ENCODE measurements at regions of chr12 and their contacts with region 1.

Region 1: DNA sequence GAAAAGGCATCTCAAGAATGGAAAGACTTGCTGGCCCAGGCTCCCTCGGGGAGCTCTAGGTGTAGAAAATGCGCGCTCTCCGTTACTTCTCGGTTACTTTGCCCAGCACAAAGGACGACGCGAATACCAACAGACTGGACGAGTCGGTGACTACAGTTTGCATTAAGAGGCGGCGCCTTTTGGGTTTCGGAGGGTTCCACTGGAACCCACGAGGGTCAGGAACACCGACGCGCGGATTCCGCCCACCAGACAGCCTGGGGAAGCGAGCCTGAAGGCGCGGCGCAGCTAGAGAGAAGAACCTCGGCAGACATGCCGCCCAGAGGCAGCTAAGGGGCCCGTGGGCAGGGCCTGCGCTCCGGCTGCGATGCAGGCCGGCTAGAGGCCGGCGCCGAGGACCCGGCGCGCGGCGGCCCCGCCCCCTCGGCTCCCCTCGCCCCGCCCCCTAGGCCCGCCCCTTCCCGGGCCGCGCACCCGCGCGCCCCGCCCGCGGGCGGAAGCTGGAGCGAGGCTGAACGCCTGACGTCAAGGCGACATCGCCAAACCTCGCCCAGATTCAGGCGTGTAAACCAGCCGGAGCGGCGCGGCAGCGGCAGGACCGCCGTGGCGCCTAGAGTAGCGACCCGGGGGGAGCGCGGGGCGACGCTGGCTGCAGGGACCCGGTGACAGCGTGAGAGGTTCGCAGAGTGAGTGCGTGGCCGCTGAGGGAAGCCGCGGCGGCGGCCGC is at the start of gene RAP1B:
- DNase-seq: peak; percentile 92 to 95 (median 92)
- ATAC-seq: peak; percentile 92 to 98 (median 96)
- H3K4me3 ChIP-seq: peak within 1 kb of the TSS; percentile 54 to 91 (median 82)
- H3K27ac ChIP-seq: peak within 1 kb of the TSS; percentile 95 to 99 (median 96)
- H3K4me1 ChIP-seq: peaks cover 5 to 43% (median 34%) of the 10 kb centered on the region in 12 donors
- H3K27me3 ChIP-seq: no peaks in the 10 kb centered on the region
- CTCF ChIP-seq: peak in 1 of 12 donors; percentile 3
- POLR2A ChIP-seq: peak in 1 of 2 donors; percentile 96
- total RNA-seq, gene RAP1B: 39.2 to 113 (median 52.2) TPM

Region 2: GRCh38 chr12:68358532-68359485 is 251.7 kb before region 1 on chr12:
- intact Hi-C with region 1: loop called in 8 of 10 experiments (anchors 2 to 10 kb)
- DNase-seq: peak in 3 of 5 donors; percentile 46 to 64 (median 58)
- ATAC-seq: peak; percentile 57 to 94 (median 80)
- H3K4me3 ChIP-seq: no peak overlapping the region
- H3K27ac ChIP-seq: peak overlapping the region in 4 of 12 donors; percentile 20 to 50 (median 44)
- H3K4me1 ChIP-seq: peaks cover 0 to 20% (median 6%) of the 10 kb centered on the region in 12 donors
- H3K27me3 ChIP-seq: no peaks in the 10 kb centered on the region
- CTCF ChIP-seq: peak; percentile 54 to 82 (median 70)
- POLR2A ChIP-seq: no peak

Region 3: DNA sequence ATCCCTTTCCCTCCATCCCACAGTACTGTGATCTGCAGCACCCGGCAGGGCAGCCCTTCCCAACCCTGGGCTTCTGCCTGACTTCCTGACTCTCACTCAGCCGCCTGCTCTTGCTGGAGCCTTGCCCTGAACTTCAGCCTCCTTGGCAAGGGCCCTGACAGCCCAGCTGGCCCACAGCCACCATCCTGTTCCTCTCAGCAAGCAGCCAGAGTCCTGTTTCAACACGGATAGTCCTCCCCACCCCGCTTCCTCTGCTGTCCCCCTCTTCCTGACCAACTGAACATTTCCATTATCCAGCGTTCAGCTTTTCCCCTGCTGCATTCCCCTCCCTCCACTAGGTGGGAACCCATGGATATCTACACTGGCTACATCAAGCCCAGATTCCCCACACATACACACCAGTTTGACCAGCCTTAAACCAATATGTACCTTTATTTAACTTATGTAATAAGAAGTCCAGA is 204.4 kb before region 1 on chr12:
- intact Hi-C with region 1: loop called in 7 of 10 experiments (anchors 2 to 5 kb)
- DNase-seq: peak; percentile 93 to 96 (median 95)
- ATAC-seq: peak; percentile 94 to 99 (median 99)
- H3K4me3 ChIP-seq: peak overlapping the region in 1 of 12 donors; percentile 26
- H3K27ac ChIP-seq: peak overlapping the region; percentile 45 to 87 (median 74)
- H3K4me1 ChIP-seq: peaks cover 5 to 32% (median 24%) of the 10 kb centered on the region in 12 donors
- H3K27me3 ChIP-seq: no peaks in the 10 kb centered on the region
- CTCF ChIP-seq: peak in 10 of 12 donors; percentile 27 to 65 (median 46)
- POLR2A ChIP-seq: peak in 1 of 2 donors; percentile 0

Region 4: DNA sequence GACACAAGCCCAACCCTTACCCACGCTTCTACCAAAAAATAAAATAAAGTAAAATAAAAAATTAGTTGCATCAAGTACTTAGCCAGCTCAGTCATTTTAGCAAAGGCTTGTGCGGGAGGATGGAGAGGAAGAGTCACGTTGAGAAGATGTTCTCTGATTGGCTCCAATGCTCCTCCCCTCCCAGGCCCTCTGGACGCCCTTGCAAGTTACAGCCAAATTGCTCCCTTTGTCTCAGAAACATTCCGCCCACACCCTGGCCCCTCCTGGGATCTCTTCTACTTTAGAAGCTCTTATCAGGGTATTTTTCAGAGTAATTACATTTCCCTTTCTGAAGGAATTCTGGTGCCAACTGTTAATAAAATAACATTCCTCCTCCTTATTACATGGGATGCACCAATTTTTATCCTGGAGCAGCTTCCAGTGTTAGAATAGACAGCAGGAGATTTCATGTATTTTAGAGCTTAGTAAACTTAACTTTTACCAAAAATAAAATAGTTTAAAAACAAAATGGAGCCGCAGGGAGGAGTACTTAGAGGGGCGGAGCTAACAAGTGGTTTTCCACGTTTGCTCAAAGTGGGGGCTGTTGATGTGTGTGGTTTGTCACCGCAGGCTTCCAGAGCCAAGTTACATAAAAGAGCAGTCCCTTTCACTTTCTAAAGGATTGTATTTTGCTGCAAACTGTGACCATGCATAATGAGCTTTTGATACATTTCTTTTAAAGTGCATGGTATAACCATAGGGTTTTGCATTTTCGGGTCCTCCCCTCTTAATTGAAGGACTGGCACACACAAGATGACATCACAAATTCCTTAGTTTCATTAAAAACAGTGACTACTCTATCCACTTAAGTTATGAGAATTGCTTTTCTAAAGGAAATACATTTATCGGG is 71.6 kb before region 1 on chr12:
- intact Hi-C with region 1: loop called in 2 of 10 experiments (anchors 1 to 10 kb)
- DNase-seq: peak; percentile 76 to 83 (median 81)
- ATAC-seq: peak; percentile 89 to 97 (median 94)
- H3K4me3 ChIP-seq: peak overlapping the region in 9 of 12 donors; percentile 4 to 52 (median 40)
- H3K27ac ChIP-seq: peak overlapping the region; percentile 26 to 86 (median 76)
- H3K4me1 ChIP-seq: peaks cover 0 to 24% (median 9%) of the 10 kb centered on the region in 12 donors
- H3K27me3 ChIP-seq: no peaks in the 10 kb centered on the region
- CTCF ChIP-seq: no peak
- POLR2A ChIP-seq: no peak

Region 5: DNA sequence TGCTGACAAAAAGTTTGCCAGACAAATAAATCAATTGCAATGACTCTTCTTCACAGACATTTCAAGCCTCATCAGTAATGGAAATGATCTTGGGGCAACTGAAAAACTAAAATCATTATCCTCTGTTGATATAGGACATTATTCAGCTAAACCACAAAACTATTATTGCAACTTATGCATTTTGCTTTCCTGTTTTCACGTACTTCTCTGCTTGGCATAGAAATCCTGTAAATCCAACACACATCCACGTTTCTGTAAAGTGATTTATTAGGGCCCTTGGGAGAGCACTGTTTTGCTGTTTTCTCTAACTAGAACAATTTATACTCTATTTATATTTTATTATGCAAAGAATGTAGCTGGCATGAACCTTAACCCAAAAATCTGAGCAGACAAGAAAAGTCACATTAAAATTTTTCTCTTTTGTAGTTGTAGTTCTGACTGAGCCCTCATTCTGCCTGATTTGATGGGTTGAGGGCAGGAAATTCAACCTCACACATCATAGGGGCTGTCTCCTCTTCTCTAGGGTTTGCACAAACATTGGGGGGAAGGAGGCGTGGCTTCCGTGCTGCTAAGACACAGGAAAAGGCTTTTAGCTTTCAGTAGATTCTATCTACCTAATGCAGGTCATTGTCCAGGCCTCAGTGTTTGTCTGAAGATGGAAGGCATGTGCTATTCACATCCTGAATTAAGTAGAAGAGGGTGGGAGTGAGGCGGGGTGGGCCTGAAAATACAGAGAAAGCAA is 64.7 kb after region 1 on chr12:
- intact Hi-C with region 1: loop called in 1 of 10 experiments (anchors 10 kb)
- DNase-seq: peak in 2 of 5 donors; percentile 14 to 30
- ATAC-seq: no peak
- H3K4me3 ChIP-seq: no peak overlapping the region
- H3K27ac ChIP-seq: peak overlapping the region in 1 of 12 donors; percentile 39
- H3K4me1 ChIP-seq: peaks cover 0 to 16% (median 0%) of the 10 kb centered on the region in 12 donors
- H3K27me3 ChIP-seq: no peaks in the 10 kb centered on the region
- CTCF ChIP-seq: no peak
- POLR2A ChIP-seq: no peak

Region 6: GRCh38 chr12:68981516-68981915 is 371.0 kb after region 1 on chr12:
- intact Hi-C with region 1: no loop called
- DNase-seq: no peak
- ATAC-seq: no peak
- H3K4me3 ChIP-seq: no peak overlapping the region
- H3K27ac ChIP-seq: no peak overlapping the region
- H3K4me1 ChIP-seq: peaks cover 0 to 16% (median 6%) of the 10 kb centered on the region in 12 donors
- H3K27me3 ChIP-seq: no peaks in the 10 kb centered on the region
- CTCF ChIP-seq: no peak
- POLR2A ChIP-seq: no peak

Region 7: DNA sequence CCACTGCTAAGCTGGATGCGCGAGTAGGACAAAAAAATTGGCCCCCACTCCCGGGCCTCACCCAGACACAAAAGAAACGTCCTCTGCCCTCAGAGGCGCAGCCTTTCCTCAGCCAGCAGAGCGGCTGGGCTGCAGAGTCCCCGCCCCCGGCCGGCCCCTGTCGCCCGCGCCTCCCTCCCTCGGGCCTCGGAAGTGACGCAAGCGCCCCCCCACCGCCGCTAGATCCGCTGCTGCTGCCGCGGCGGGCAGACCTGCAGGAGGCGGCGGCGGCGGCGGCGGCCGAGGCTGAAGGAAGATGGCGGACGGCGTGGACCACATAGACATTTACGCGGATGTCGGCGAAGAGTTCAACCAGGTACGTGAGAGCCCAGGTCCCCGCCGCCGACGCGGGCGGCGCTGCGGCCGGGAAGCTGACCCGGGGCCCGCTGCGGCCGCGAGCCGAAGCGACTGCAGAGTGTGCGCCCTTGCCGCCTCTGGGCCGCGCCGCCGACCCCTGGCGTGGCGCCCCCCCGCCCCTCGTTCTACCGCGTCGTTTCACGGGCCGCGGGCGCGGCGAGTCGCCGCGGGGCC is 628.9 kb after region 1 on chr12 and contains the start of gene CPSF6:
- intact Hi-C with region 1: loop called in 1 of 10 experiments (anchors 5 kb)
- DNase-seq: peak; percentile 97 to 99 (median 97)
- ATAC-seq: peak; percentile 99 to 100 (median 100)
- H3K4me3 ChIP-seq: peak within 1 kb of the TSS; percentile 75 to 99 (median 86)
- H3K27ac ChIP-seq: peak within 1 kb of the TSS; percentile 85 to 98 (median 93)
- H3K4me1 ChIP-seq: peaks cover 9 to 44% (median 35%) of the 10 kb centered on the region in 12 donors
- H3K27me3 ChIP-seq: no peaks in the 10 kb centered on the region
- CTCF ChIP-seq: peak in 6 of 12 donors; percentile 5 to 27 (median 14)
- POLR2A ChIP-seq: peak in 1 of 2 donors; percentile 92
- total RNA-seq, gene CPSF6: 15.8 to 34.8 (median 30.1) TPM

Measured in heart left ventricle (tissue), 16 donors.